Activated CD8-positive, alpha-beta T cell treated with anti-CD3 and anti-CD28 coated beads, Interleukin-2, amount 10 ng/mL, durations not matched to agents 7 days and 5 days (primary cell): ENCODE measurements at regions of chr10 and their contacts with region 1.

Region 1: DNA sequence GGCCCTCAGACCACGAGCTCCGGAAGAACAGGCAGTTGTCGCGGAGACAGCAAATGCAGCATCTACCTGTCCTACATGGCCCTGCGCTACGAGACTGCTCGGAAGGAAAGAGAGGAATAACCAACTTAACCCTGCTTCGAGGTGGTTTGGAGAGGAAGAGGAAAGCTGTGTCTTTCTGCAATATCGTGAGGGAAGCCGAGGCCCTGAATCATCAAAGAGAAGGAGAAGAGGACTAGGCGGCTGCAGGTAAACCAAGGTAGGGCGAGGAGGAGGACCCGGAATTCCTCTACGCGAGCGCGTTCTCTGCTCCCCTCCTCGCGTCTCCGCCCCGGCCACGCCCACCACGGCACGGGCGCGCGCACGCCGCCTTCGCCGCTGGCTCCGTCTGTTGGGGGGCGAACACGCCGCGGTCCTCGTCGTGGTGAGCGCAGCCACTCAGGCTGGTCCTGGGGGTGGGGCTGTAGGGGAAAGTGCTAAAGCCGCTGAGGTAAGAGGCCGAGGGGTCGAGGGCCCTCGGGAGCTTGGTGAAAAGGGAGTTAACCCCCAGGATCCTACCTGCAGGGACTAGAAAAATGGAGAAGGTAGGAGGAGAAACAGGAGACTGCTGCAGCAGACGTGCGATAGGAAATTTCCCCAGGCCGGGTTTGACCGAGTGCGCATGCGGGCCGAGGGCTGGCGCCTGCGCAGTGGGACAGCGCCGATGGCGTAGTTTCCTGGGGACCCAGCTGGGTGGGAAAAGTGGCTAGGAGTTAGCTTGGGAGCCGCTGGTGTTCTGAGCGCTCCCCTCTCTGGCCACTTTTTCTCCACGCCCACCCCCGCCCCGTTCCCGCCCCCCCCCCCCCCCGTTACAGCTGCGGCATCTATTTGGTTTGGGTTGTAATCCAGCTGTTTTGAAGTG is at the starts of genes ANAPC16 and ASCC1:
- DNase-seq: peak; percentile 95
- ATAC-seq: peak; percentile 88
- H3K4me3 Mint-ChIP-seq: peak within 1 kb of the TSS; percentile 96
- H3K27ac Mint-ChIP-seq: peak within 1 kb of the TSS; percentile 96
- H3K4me1 Mint-ChIP-seq: peaks cover 52% of the 10 kb centered on the region
- H3K27me3 Mint-ChIP-seq: no peaks in the 10 kb centered on the region
- total RNA-seq, gene ANAPC16: 72.9 TPM
- total RNA-seq, gene ASCC1: 34.8 to 40.3 TPM

Region 2: GRCh38 chr10:72088889-72089575 is 126.9 kb before region 1 on chr10:
- CTCF ChIA-PET with region 1: interaction called, 3 read pairs
- POLR2A ChIA-PET with region 1: interaction called, 12 read pairs
- DNase-seq: peak; percentile 73
- ATAC-seq: peak; percentile 54
- H3K4me3 Mint-ChIP-seq: peak overlapping the region; percentile 97
- H3K27ac Mint-ChIP-seq: peak overlapping the region; percentile 99
- H3K4me1 Mint-ChIP-seq: peaks cover 56% of the 10 kb centered on the region
- H3K27me3 Mint-ChIP-seq: no peaks in the 10 kb centered on the region

Region 3: GRCh38 chr10:72449915-72450441 is 234.1 kb after region 1 on chr10:
- CTCF ChIA-PET with region 1: no interaction called
- POLR2A ChIA-PET with region 1: no interaction called
- DNase-seq: no peak
- ATAC-seq: no peak
- H3K4me3 Mint-ChIP-seq: no peak overlapping the region
- H3K27ac Mint-ChIP-seq: no peak overlapping the region
- H3K4me1 Mint-ChIP-seq: no peaks in the 10 kb centered on the region
- H3K27me3 Mint-ChIP-seq: no peaks in the 10 kb centered on the region